ENCODE measurements at regions of chr12 and their contacts with region 1.

Region 1: DNA sequence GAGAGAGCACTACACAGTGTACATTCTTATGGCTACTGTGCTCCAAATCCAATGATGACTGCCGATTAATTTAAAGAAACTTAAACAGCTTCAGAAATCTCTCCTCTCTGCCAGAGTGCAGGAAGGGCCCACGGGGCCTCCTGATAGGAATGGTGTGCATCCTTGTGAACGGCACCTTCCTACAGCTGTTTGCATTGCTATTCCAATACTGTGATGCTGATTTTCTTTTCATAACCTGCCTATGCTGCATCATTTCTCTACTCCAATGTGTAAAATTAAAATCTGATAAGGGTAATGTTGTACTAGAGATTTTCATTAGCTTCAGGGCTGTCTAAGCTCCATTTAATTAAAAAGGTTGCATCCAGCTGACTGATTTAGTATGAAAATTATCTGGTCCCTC is 159.0 kb downstream of the HELB start:
- DNase-seq: no peak
- H3K4me3 Mint-ChIP-seq: no peak overlapping the region
- H3K27ac Mint-ChIP-seq: no peak overlapping the region
- H3K4me1 Mint-ChIP-seq: no peaks in the 10 kb centered on the region
- H3K27me3 Mint-ChIP-seq: no peaks in the 10 kb centered on the region
- CTCF ChIP-seq: no peak

Region 2: GRCh38 chr12:65449400-65449799 is 1011.9 kb before region 1 on chr12:
- CTCF ChIA-PET with region 1: interaction called, 10 read pairs
- intact Hi-C with region 1: no loop called
- DNase-seq: no peak
- H3K4me3 Mint-ChIP-seq: no peak overlapping the region
- H3K27ac Mint-ChIP-seq: no peak overlapping the region
- H3K4me1 Mint-ChIP-seq: peaks cover 8% of the 10 kb centered on the region
- H3K27me3 Mint-ChIP-seq: no peaks in the 10 kb centered on the region
- CTCF ChIP-seq: no peak

Measured in Calu3 (cell line).